ENCODE measurements at regions of chr10 and their contacts with region 1.

Region 1: GRCh38 chr10:3239066-3239919 is 66.7 kb upstream of the PITRM1 start:
- DNase-seq: peak; percentile 83
- H3K4me3 ChIP-seq: no peak overlapping the region
- H3K27ac ChIP-seq: no peak overlapping the region
- H3K4me1 ChIP-seq: peaks cover 0 to 7% (median 0%) of the 10 kb centered on the region in 4 donors
- H3K27me3 ChIP-seq: no peaks in the 10 kb centered on the region
- CTCF ChIP-seq: peak; percentile 88 to 95 (median 91)
- EP300 ChIP-seq: no peak
- POLR2A ChIP-seq: no peak

Region 2: DNA sequence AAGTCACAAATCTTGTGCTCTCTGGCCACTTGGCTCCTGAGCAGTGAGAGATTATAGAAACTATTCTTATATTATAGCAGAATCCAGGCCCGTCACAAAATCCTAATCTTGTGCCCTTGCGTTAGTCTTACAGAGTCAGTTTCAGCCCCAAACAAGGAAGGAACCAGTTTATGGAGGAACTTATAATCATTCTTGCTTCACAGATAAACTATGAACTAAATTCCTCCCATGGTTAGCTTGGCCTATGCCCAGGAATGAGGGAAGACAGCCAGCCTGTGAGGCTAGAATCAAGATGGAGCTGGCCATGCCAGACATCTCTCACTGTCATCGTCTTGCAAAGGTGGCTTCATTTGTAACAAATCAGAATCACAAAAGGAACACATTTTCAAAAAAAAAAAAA is 133.0 kb after region 1 on chr10:
- in situ Hi-C with region 1: no loop called
- intact Hi-C with region 1: no loop called
- DNase-seq: no peak
- H3K4me3 ChIP-seq: no peak overlapping the region
- H3K27ac ChIP-seq: peak overlapping the region in 3 of 4 donors; percentile 35 to 51 (median 38)
- H3K4me1 ChIP-seq: peaks cover 0 to 7% (median 2%) of the 10 kb centered on the region in 4 donors
- H3K27me3 ChIP-seq: no peaks in the 10 kb centered on the region
- CTCF ChIP-seq: no peak
- EP300 ChIP-seq: no peak
- POLR2A ChIP-seq: no peak

Region 3: GRCh38 chr10:4663162-4663904 is 1424.0 kb after region 1 on chr10:
- in situ Hi-C with region 1: loop called (anchors 25 kb)
- intact Hi-C with region 1: no loop called
- DNase-seq: peak; percentile 77
- H3K4me3 ChIP-seq: no peak overlapping the region
- H3K27ac ChIP-seq: peak overlapping the region; percentile 89 to 90 (median 90)
- H3K4me1 ChIP-seq: peaks cover 25 to 46% (median 33%) of the 10 kb centered on the region in 4 donors
- H3K27me3 ChIP-seq: no peaks in the 10 kb centered on the region
- CTCF ChIP-seq: no peak
- EP300 ChIP-seq: peak; percentile 96
- POLR2A ChIP-seq: peak; percentile 57